Breast epithelium (tissue), 4 donors: ENCODE measurements at regions of chr2 and their contacts with region 1.

Region 1: GRCh38 chr2:75619956-75620740 is 26.4 kb upstream of the MRPL19 start:
- DNase-seq: no peak
- H3K4me3 ChIP-seq: no peak overlapping the region
- H3K27ac ChIP-seq: no peak overlapping the region
- H3K4me1 ChIP-seq: no peaks in the 10 kb centered on the region
- H3K27me3 ChIP-seq: no peaks in the 10 kb centered on the region
- CTCF ChIP-seq: no peak
- POLR2A ChIP-seq: no peak

Region 2: GRCh38 chr2:75466708-75467311 is 153.3 kb before region 1 on chr2:
- intact Hi-C with region 1: loop called (anchors 10 kb)
- DNase-seq: no peak
- H3K4me3 ChIP-seq: no peak overlapping the region
- H3K27ac ChIP-seq: no peak overlapping the region
- H3K4me1 ChIP-seq: no peaks in the 10 kb centered on the region
- H3K27me3 ChIP-seq: no peaks in the 10 kb centered on the region
- CTCF ChIP-seq: no peak
- POLR2A ChIP-seq: no peak